T-cell (primary cell): ENCODE measurements at regions of chrX and their contacts with region 1.

Region 1: DNA sequence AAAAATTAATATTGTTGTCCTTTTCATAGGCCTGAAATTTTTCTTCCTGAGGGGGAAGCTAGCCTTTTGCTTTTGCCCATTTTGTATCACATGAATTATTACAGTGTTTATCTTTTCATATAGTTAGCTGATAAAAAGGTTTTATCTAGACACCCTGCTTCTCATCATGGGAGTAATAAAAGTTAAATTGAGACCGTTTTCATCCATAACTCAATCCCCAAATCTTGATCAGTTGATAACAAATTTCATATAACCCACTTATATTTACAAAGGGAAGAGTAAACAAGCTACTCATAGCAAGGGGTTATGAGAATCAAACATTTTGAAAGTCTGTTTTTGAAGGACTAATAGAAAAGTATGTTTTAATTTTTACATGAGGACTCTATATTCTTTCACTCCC is 23.5 kb upstream of the DCX start:
- DNase-seq: no peak
- ATAC-seq: no peak
- H3K4me3 ChIP-seq: no peak overlapping the region
- H3K4me3 Mint-ChIP-seq: no peak overlapping the region
- H3K27ac ChIP-seq: no peak overlapping the region
- H3K27ac Mint-ChIP-seq: no peak overlapping the region
- H3K4me1 ChIP-seq: no peaks in the 10 kb centered on the region
- H3K4me1 Mint-ChIP-seq: no peaks in the 10 kb centered on the region
- H3K27me3 ChIP-seq: no peaks in the 10 kb centered on the region
- H3K27me3 Mint-ChIP-seq: peaks cover 4 to 31% of the 10 kb centered on the region in 2 donors

Region 2: GRCh38 chrX:111309083-111309482 is 126.4 kb before region 1 on chrX:
- CTCF ChIA-PET with region 1: no interaction called
- POLR2A ChIA-PET with region 1: interaction called in 1 of 2 experiments, 10 read pairs
- DNase-seq: no peak
- ATAC-seq: no peak
- H3K4me3 ChIP-seq: no peak overlapping the region
- H3K4me3 Mint-ChIP-seq: no peak overlapping the region
- H3K27ac ChIP-seq: no peak overlapping the region
- H3K27ac Mint-ChIP-seq: no peak overlapping the region
- H3K4me1 ChIP-seq: no peaks in the 10 kb centered on the region
- H3K4me1 Mint-ChIP-seq: no peaks in the 10 kb centered on the region
- H3K27me3 ChIP-seq: no peaks in the 10 kb centered on the region
- H3K27me3 Mint-ChIP-seq: peaks cover 0 to 34% of the 10 kb centered on the region in 2 donors

Region 3: DNA sequence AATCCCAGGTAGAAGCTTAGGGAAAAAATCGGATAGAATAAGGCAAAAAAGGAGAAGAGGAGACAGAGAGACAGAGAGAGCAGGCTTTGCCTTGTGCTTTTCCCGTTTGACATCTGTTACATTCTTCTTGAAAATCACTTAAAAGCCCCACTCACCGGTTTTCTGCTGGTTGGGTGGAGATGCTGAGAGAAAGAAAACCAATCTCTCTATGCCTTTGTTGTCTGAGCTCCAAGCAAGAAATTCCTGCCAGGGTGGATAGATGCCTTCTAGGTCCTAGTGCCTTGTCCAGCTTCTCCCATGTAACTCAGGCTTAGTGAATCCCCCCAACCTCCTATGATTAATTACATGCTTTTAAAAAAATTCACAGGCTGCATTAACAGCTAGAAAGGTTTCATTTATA is 23.5 kb before region 1 on chrX and contains the start of gene DCX:
- CTCF ChIA-PET with region 1: no interaction called
- POLR2A ChIA-PET with region 1: no interaction called
- DNase-seq: no peak
- ATAC-seq: no peak
- H3K4me3 ChIP-seq: no peak within 1 kb of the TSS
- H3K4me3 Mint-ChIP-seq: no peak within 1 kb of the TSS
- H3K27ac ChIP-seq: no peak within 1 kb of the TSS
- H3K27ac Mint-ChIP-seq: no peak within 1 kb of the TSS
- H3K4me1 ChIP-seq: no peaks in the 10 kb centered on the region
- H3K4me1 Mint-ChIP-seq: no peaks in the 10 kb centered on the region
- H3K27me3 ChIP-seq: peaks cover 2% of the 10 kb centered on the region in 2 experiments
- H3K27me3 Mint-ChIP-seq: peaks cover 5 to 43% of the 10 kb centered on the region in 2 donors
- total RNA-seq, gene DCX: not detected

Region 4: DNA sequence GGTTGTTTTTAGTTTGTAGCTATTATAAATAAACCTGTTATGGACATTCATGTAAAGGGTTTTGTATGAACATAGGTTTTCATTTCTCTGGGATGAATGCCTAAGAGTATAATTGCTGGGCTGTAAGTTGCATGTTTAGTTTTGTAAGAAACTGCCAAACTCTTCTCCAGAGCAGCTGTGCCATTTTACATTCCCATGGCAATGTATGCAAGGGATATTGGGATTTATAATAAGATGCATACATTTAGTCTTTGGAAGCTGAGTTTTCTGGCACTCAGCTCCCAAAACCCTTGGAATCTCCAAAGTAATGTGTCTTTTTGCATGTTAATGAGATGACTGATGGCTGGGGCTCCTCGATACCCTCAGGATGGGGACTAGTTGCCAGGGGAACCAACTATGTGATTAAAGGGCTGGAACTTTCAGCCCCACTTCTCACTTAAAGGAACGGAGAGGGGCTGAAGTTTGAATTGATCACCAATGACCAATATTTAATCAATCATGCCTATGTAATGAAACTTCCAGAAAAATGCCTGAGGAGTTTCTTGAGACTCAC is 120.0 kb after region 1 on chrX:
- CTCF ChIA-PET with region 1: no interaction called
- POLR2A ChIA-PET with region 1: no interaction called
- DNase-seq: no peak
- ATAC-seq: no peak
- H3K4me3 ChIP-seq: no peak overlapping the region
- H3K4me3 Mint-ChIP-seq: no peak overlapping the region
- H3K27ac ChIP-seq: no peak overlapping the region
- H3K27ac Mint-ChIP-seq: no peak overlapping the region
- H3K4me1 ChIP-seq: no peaks in the 10 kb centered on the region
- H3K4me1 Mint-ChIP-seq: no peaks in the 10 kb centered on the region
- H3K27me3 ChIP-seq: no peaks in the 10 kb centered on the region
- H3K27me3 Mint-ChIP-seq: peaks cover 0 to 8% of the 10 kb centered on the region in 2 donors